ENCODE measurements at regions of chr2 and their contacts with region 1.

Region 1: DNA sequence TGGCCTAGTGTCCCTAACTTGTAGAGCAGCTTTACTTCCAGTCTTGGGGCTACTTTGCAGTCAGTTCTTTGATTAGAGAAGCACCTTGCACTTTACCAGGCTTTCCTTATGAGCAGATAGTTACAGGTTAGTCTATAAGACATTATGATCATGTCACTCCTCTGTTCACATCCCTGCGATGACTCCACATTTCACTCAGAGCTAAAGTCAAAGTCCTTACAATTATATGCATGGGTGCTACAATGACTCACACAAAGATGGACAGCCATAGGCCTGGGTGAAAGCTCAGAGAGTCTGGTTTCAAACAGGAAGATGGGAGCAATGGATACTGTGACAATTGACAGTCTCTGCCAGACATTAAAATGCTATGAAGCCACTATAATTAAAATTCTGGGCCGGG is 27.1 kb upstream of the SSB start:
- DNase-seq: no peak
- H3K4me3 ChIP-seq: no peak overlapping the region
- H3K27ac ChIP-seq: no peak overlapping the region
- H3K4me1 ChIP-seq: peaks cover 10% of the 10 kb centered on the region
- H3K27me3 ChIP-seq: no peaks in the 10 kb centered on the region
- CTCF ChIP-seq: no peak
- POLR2A ChIP-seq: no peak

Region 2: DNA sequence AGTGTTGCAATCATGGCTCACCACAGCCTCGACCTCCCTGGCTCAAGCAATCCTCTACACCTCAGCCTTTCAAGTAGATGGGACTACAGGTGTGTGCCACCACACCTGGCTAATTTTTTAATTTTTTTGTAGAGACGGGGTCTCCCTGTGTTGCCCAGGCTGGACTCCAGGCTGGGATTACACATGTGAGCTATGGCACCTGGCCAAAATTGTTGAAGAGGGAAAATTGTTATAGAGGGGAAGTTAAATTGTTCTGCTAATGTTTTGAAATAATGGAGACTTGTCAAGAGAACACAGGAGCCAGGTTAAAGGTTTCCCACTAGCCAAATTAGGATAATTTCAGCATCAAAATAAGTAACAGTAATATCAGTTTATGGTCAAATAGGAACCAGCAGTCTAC is 162.3 kb before region 1 on chr2:
- intact Hi-C with region 1: no loop called
- DNase-seq: no peak
- H3K4me3 ChIP-seq: no peak overlapping the region
- H3K27ac ChIP-seq: no peak overlapping the region
- H3K4me1 ChIP-seq: no peaks in the 10 kb centered on the region
- H3K27me3 ChIP-seq: no peaks in the 10 kb centered on the region
- CTCF ChIP-seq: no peak
- POLR2A ChIP-seq: no peak

Region 3: DNA sequence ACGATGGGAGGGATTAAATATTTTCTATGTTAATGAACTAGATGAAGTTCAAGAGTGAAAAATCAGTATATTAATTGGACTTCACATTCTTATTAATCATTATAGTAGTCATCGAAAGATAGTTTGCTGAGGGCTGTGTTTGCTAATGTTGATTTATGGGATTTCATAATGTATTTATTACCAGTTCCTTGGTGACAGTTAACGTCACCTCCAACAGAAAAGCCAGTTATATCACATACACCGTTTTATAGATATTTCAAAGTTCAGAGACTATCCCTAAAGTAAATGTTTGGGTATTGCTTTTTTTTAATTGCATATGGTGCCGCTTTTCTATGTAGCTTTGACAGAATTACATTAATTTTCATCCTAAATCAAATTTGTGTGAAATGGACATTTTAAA is 894.1 kb after region 1 on chr2:
- intact Hi-C with region 1: loop called (anchors 5 kb)
- DNase-seq: no peak
- H3K4me3 ChIP-seq: no peak overlapping the region
- H3K27ac ChIP-seq: no peak overlapping the region
- H3K4me1 ChIP-seq: no peaks in the 10 kb centered on the region
- H3K27me3 ChIP-seq: no peaks in the 10 kb centered on the region
- CTCF ChIP-seq: no peak
- POLR2A ChIP-seq: no peak

Measured in vagina (tissue), 2 donors.